ENCODE measurements at regions of chr5 and their contacts with region 1.

Region 1: GRCh38 chr5:177491429-177491945 is 5.9 kb downstream of the PDLIM7 start:
- DNase-seq: peak; percentile 91
- H3K4me3 ChIP-seq: peak overlapping the region in 1 of 2 experiments; percentile 56; a peak in 1 of 4 replicates
- H3K27ac ChIP-seq: 0 out of 4 replicates have a peak overlapping the region, but pooled peaks of 1 of the 2 experiments have one; percentile 15
- H3K4me1 ChIP-seq: peaks cover 33 to 39% of the 10 kb centered on the region in 2 experiments; a peak in 3 of 4 replicates
- H3K27me3 ChIP-seq: no peaks in the 10 kb centered on the region
- CTCF ChIP-seq: peak; percentile 64
- EP300 ChIP-seq: no peak
- RAD21 ChIP-seq: no peak; the same call in 1 of the 2 replicates

Region 2: DNA sequence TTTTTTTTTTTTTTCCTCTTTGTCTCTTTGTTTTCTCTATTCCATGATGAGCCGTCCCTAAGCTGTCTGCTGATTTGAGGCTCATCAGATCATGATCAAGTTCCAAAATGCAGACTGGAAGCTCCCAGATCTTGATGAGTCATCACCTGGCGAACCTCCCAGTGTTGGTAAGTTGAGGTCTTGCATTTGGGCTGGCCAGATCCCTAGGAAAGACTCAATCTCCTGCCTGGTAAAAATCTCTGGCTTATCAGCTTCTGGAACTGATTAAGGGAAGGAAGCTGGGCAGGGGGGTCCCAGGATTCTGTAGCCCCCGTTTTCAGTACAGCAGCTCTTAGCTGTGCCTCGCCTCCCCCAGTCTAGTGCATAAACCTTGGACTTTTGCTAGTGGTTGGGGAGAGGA is 775.2 kb before region 1 on chr5:
- CTCF ChIA-PET with region 1: no interaction called
- POLR2A ChIA-PET with region 1: no interaction called
- DNase-seq: peak; percentile 66
- H3K4me3 ChIP-seq: no peak overlapping the region
- H3K27ac ChIP-seq: no peak overlapping the region
- H3K4me1 ChIP-seq: peaks cover 8 to 9% of the 10 kb centered on the region in 2 experiments; a peak in 2 of 4 replicates
- H3K27me3 ChIP-seq: peaks cover 18% of the 10 kb centered on the region
- CTCF ChIP-seq: no peak
- EP300 ChIP-seq: peak; percentile 13 to 14; a peak in 1 of 4 replicates
- RAD21 ChIP-seq: no peak

Region 3: DNA sequence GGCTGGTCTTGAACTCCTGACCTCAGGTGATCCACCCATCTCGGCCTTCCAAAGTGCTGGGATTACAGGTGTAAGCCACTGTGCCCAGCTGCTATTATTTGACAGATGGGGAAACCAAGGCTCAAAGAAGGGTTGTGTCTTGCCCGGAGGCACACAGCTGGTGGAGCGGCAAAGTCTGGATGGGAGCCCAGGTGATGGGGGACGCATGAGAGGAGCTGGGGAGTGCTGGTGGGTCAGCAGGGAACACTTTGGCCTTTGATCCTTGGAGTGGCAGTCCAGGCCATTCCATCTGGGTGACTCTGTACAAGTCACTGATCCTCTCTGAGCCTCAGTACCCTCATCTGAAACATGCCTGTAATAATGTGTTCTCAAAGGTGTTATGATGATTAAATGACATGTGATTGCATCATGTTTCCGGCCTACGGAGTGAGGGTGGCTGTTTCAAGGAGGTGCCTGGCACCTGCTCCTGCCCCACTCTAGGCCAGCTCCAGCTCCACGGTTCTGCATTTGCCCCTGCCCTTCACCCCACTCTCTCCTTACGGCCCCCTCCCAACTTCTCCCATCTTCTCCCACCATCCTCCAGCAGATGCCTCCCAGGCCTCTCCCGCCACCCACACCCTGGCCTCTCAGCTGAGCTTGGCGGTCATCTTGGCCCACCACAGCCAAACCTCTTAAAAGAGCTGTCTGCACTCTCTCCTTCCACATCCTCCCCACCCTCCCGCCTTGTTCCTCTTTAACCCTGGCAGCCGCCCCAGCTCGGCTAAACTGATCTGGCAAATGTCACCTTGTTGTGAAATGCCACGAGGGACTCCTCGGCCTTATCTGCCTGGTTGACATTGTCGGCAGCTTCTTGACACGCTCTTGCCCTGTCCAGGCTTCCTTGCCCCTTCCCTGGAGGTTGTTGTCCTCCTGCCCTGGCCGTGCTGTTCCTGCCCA is 12.5 kb before region 1 on chr5:
- CTCF ChIA-PET with region 1: interaction called, 201 read pairs
- POLR2A ChIA-PET with region 1: interaction called, 39 read pairs
- DNase-seq: peak; percentile 73
- H3K4me3 ChIP-seq: no peak overlapping the region
- H3K27ac ChIP-seq: peak overlapping the region; percentile 69 to 95; a peak in 3 of 4 replicates
- H3K4me1 ChIP-seq: peaks cover 6 to 84% of the 10 kb centered on the region in 2 experiments; a peak in 3 of 4 replicates
- H3K27me3 ChIP-seq: no peaks in the 10 kb centered on the region
- CTCF ChIP-seq: no peak
- EP300 ChIP-seq: peak in 1 of 2 experiments; percentile 7; a peak in 1 of 4 replicates
- RAD21 ChIP-seq: 0 out of 2 replicates have a peak, but pooled peaks have one; percentile 12

Measured in SK-N-SH (cell line).